ENCODE measurements at regions of chr22 and their contacts with region 1.

Region 1: DNA sequence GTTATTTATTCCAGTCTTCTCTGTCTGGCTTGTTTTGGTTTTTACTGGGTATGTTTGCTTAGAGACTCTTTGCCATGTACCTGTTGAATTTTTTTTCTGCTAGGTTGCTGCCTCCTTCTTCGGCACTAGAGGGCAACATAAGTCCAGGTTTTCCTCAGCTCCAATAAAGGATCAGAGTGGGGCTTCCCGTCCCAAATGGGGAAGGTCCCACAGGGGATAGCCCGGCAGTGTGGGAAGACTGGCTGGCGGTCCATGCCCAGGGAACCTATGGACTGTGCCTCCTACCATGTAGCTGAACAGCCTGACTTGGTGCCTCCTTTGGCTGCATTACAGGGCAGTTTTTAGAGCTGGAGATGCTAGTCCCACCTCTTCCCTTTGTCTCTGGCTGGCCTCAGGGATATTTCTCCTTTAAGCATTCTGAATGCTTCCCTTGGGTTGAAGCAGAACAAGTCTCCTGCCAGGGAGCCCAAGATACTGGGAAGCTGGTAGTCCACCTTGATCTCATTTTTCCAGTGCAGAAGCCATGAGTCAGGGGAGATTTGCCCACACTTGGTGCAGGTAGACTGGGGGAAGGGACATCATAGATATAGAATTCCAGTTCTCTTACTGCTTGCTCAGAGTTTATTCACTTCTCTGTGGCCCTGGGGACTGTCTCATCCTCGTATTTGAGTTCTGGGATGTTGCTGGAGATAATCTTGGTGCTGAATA is 60.2 kb downstream of the BRD1 start:
- DNase-seq: peak; percentile 55
- H3K4me3 Mint-ChIP-seq: no peak overlapping the region
- H3K27ac Mint-ChIP-seq: no peak overlapping the region
- H3K4me1 Mint-ChIP-seq: no peaks in the 10 kb centered on the region
- H3K27me3 Mint-ChIP-seq: no peaks in the 10 kb centered on the region
- CTCF ChIP-seq: peak; percentile 65

Region 2: DNA sequence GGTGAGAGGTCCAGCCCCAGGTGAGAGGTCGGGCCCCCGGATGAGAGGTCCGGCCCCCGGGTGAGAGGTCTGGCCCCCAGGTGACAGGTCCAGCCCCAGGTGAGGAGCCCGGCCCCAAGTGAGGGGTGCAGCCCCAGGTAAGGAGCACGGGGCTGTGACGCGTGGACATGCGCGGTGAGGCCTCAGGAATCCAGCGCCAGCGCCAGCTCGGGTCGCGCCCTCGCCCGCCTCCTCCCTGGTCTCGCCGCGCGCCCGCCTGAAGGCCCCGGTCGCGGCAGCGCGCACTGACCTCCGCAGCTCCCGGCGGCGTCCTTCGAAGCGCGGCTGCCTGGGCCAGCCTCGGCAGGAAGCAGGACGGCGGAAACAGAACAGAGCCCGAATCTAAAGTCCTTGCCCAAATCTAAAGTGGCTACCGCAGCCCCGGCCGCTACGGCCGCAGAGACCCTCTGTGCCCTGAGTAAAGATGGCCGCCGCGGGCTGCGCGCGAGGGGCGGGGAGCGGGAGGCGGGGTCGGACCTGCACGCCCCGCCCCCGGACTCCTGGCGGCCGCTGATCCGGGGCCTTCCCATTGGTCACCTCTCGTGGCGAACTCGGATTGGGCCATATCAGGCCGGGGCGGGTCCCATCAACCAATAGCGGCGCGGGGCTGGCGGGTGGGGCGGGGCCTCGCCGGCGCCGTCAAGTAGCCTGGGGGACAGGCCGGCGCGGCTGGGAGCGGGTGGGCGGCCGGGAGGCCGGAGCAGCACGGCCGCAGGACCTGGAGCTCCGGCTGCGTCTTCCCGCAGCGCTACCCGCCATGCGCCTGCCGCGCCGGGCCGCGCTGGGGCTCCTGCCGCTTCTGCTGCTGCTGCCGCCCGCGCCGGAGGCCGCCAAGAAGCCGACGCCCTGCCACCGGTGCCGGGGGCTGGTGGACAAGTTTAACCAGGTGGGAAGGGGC is 150.7 kb after region 1 on chr22 and contains the starts of genes ALG12 and CRELD2:
- CTCF ChIA-PET with region 1: no interaction called
- POLR2A ChIA-PET with region 1: no interaction called
- intact Hi-C with region 1: loop called (anchors 1 kb)
- DNase-seq: peak; percentile 96
- H3K4me3 Mint-ChIP-seq: peak within 1 kb of the TSS; percentile 74
- H3K27ac Mint-ChIP-seq: peak within 1 kb of the TSS; percentile 83
- H3K4me1 Mint-ChIP-seq: no peaks in the 10 kb centered on the region
- H3K27me3 Mint-ChIP-seq: no peaks in the 10 kb centered on the region
- CTCF ChIP-seq: no peak
- total RNA-seq, gene ALG12: 16.6 and 18.2 TPM in 2 replicates
- total RNA-seq, gene CRELD2: 70.7 and 107 TPM in 2 replicates

Measured in MCF 10A (cell line).